Calu3 (cell line): ENCODE measurements at regions of chr17 and their contacts with region 1.

Region 1: GRCh38 chr17:40559954-40560591 is 5.2 kb downstream of the CCR7 start:
- DNase-seq: peak; percentile 100
- H3K4me3 Mint-ChIP-seq: peak overlapping the region; percentile 47
- H3K27ac Mint-ChIP-seq: no peak overlapping the region
- H3K4me1 Mint-ChIP-seq: peaks cover 17% of the 10 kb centered on the region
- H3K27me3 Mint-ChIP-seq: peaks cover 99% of the 10 kb centered on the region
- CTCF ChIP-seq: no peak

Region 2: GRCh38 chr17:39963829-39964228 is 596.2 kb before region 1 on chr17:
- CTCF ChIA-PET with region 1: interaction called, 10 read pairs
- intact Hi-C with region 1: no loop called
- DNase-seq: peak; percentile 94
- H3K4me3 Mint-ChIP-seq: no peak overlapping the region
- H3K27ac Mint-ChIP-seq: peak overlapping the region; percentile 0
- H3K4me1 Mint-ChIP-seq: peaks cover 45% of the 10 kb centered on the region
- H3K27me3 Mint-ChIP-seq: peaks cover 32% of the 10 kb centered on the region
- CTCF ChIP-seq: no peak

Region 3: GRCh38 chr17:39996800-39997199 is 563.3 kb before region 1 on chr17:
- CTCF ChIA-PET with region 1: no interaction called
- intact Hi-C with region 1: no loop called
- DNase-seq: no peak
- H3K4me3 Mint-ChIP-seq: no peak overlapping the region
- H3K27ac Mint-ChIP-seq: no peak overlapping the region
- H3K4me1 Mint-ChIP-seq: no peaks in the 10 kb centered on the region
- H3K27me3 Mint-ChIP-seq: no peaks in the 10 kb centered on the region
- CTCF ChIP-seq: no peak

Region 4: GRCh38 chr17:40422990-40423616 is 137.0 kb before region 1 on chr17:
- CTCF ChIA-PET with region 1: interaction called, 128 read pairs
- intact Hi-C with region 1: loop called (anchors 1 kb)
- DNase-seq: peak; percentile 73
- H3K4me3 Mint-ChIP-seq: no peak overlapping the region
- H3K27ac Mint-ChIP-seq: no peak overlapping the region
- H3K4me1 Mint-ChIP-seq: peaks cover 20% of the 10 kb centered on the region
- H3K27me3 Mint-ChIP-seq: peaks cover 24% of the 10 kb centered on the region
- CTCF ChIP-seq: no peak

Region 5: DNA sequence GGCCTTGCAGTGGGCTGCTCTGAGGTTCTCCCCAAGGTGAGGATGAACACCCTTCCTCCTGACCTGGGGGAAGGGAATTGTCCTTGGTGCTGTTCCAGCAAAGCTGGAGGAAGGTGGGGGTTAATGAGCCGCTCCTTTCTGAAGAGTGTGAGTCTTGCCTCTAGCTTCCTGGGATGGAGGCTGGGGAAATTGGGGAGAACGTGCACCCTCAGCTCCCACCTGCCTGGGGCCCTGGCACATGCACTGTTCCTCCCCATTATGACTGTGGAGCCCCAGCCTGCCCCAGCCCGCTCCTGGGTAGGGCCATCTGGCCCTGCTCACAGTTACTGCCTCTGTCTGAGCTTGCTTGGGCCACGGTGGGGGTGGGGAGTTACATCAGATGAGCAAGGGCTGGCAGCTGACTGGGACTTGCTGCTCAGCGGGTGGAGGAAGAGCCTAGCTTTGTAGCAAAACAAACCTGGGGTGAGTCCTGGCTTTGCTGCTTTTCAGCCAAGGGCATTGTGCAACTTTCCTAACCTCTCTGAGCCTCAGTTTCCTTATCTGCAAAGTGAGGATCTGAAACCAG is 69.7 kb before region 1 on chr17:
- CTCF ChIA-PET with region 1: interaction called, 4,142 read pairs
- intact Hi-C with region 1: no loop called
- DNase-seq: no peak
- H3K4me3 Mint-ChIP-seq: no peak overlapping the region
- H3K27ac Mint-ChIP-seq: no peak overlapping the region
- H3K4me1 Mint-ChIP-seq: peaks cover 30% of the 10 kb centered on the region
- H3K27me3 Mint-ChIP-seq: peaks cover 71% of the 10 kb centered on the region
- CTCF ChIP-seq: no peak

Region 6: GRCh38 chr17:40516581-40517285 is 43.3 kb before region 1 on chr17:
- CTCF ChIA-PET with region 1: interaction called, 1,743 read pairs
- intact Hi-C with region 1: loop called (anchors 1 kb)
- DNase-seq: peak; percentile 94
- H3K4me3 Mint-ChIP-seq: no peak overlapping the region
- H3K27ac Mint-ChIP-seq: peak overlapping the region; percentile 1
- H3K4me1 Mint-ChIP-seq: peaks cover 65% of the 10 kb centered on the region
- H3K27me3 Mint-ChIP-seq: peaks cover 26% of the 10 kb centered on the region
- CTCF ChIP-seq: no peak

Region 7: GRCh38 chr17:40582328-40582901 is 22.3 kb after region 1 on chr17:
- CTCF ChIA-PET with region 1: interaction called, 29 read pairs
- intact Hi-C with region 1: no loop called
- DNase-seq: peak; percentile 60
- H3K4me3 Mint-ChIP-seq: no peak overlapping the region
- H3K27ac Mint-ChIP-seq: no peak overlapping the region
- H3K4me1 Mint-ChIP-seq: peaks cover 8% of the 10 kb centered on the region
- H3K27me3 Mint-ChIP-seq: peaks cover 93% of the 10 kb centered on the region
- CTCF ChIP-seq: no peak

Region 8: DNA sequence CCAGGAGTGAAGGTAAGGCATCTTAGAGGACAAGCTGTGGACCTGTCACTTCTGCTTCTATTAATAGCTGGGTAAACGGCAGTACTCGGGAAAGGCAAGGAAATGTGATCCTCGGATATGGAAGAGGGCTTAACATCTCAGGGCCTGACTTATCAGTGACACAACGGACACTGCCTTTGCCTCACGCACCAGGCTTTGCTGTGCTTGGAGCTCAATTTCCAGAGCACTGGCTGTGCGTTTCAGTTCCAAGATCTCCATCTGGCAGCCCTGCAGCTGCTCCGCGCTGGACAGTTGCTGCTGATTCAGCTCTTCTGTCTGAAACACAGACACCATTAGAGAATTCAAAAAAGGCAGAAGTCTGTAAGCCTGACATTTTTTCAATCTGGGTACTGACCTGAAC is 420.5 kb after region 1 on chr17:
- CTCF ChIA-PET with region 1: no interaction called
- intact Hi-C with region 1: no loop called
- DNase-seq: no peak
- H3K4me3 Mint-ChIP-seq: no peak overlapping the region
- H3K27ac Mint-ChIP-seq: no peak overlapping the region
- H3K4me1 Mint-ChIP-seq: peaks cover 11% of the 10 kb centered on the region
- H3K27me3 Mint-ChIP-seq: no peaks in the 10 kb centered on the region
- CTCF ChIP-seq: no peak